Activated CD8-positive, alpha-beta memory T cell treated with anti-CD3 and anti-CD28 coated beads, Interleukin-2, amount 10 ng/mL, durations not matched to agents 7 days and 5 days (primary cell): ENCODE measurements at regions of chr13 and their contacts with region 1.

Region 1: GRCh38 chr13:113187263-113187669 is 21.2 kb downstream of the PCID2 start:
- DNase-seq: peak; percentile 55
- ATAC-seq: peak; percentile 28
- H3K4me3 Mint-ChIP-seq: no peak overlapping the region
- H3K27ac Mint-ChIP-seq: peak overlapping the region; percentile 56
- H3K4me1 Mint-ChIP-seq: peaks cover 56% of the 10 kb centered on the region
- H3K27me3 Mint-ChIP-seq: no peaks in the 10 kb centered on the region

Region 2: DNA sequence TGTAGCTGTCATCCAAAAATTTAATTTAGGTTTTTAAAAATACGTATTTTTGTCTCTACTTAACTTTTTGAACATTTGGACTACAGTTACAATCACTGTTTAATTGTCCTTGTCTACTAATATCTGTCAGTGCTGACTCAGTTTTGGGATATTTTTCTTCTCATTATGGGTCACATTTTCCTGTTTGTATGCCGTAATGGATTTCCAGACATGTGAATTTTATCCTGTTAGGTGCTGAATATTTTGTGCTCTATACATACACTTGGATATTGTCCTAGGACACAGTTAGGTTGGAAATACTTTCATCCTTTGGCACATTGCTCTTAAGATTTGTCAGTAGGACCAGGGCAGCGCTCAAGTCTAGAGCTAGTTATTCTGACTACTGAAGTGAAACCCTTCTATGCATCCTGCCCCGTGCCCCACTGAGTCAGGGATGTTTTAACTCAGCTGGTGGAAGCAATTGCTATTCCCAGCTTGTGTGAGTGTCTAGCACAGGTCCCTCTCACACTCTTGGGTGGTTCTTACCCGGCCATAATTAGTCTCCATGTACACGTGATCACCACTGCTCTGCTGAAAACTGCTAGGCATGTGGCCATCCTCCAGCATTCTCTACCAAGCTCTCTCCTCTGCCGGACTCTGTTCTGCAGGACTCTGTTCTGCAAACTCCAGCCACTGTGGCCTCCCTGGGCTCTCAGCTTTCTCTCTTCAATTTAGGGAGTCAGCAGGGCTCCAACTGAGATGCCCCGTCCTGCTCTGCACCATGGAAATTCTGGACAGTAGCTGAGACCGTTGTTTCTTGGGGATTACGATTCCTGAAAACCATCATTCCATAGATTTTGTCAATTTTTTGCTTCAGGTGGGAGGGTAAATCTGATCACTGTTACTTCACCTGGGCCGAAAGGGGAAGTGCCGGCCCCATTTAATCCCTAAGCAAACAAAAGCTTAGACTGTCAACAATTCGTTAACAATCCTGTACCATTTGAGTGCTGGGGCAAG is 17.7 kb before region 1 on chr13:
- CTCF ChIA-PET with region 1: no interaction called
- DNase-seq: no peak
- ATAC-seq: no peak
- H3K4me3 Mint-ChIP-seq: no peak overlapping the region
- H3K27ac Mint-ChIP-seq: no peak overlapping the region
- H3K4me1 Mint-ChIP-seq: peaks cover 12% of the 10 kb centered on the region
- H3K27me3 Mint-ChIP-seq: no peaks in the 10 kb centered on the region

Region 3: DNA sequence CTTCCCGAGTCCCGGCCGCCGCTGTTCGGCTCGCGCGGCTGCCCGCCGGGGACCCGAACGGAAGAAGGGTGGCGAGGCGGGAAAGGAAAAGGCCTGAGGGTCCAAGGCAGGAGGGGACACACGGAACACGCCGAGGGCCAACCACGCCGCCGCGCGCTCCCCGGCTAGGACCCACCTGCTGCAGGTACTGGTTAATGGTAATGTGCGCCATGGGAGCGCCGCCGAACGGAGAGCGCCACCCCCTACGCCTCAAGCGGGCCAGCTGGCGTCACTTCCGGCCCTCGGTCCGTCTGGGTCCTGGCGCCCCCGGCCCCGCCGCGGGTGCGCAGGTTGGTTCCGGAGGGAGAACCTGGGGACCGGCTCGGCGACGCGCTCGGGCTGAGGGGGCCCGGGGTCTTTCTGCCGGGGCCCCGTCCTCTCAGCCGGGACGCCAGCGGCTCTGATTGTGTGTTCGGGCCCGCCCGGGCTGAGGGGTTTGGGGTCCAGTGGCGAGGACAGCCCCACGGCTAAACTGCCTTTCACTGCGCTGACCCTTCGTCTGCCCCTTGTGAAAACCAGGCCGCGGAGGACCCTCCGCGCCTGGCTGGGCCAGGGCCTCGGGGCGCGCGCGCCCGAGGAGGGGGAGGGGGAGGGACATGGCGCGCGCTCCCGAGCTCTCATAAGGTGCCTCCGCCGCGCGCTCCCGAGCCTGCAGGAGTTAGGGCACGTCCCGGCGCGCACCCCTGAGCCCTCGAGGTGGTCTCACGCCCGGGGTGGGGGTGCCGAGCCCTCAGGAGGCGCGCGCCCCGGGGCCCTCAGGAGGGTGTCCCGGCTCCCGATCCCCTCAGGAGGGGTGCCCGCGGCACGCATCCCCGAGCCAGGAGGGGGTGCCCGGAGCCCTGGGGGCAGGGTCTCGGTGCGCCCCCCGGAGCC is 21.4 kb after region 1 on chr13 and contains the start of gene PCID2:
- CTCF ChIA-PET with region 1: interaction called, 18 read pairs
- DNase-seq: peak; percentile 91
- ATAC-seq: peak; percentile 80
- H3K4me3 Mint-ChIP-seq: peak within 1 kb of the TSS; percentile 81
- H3K27ac Mint-ChIP-seq: peak within 1 kb of the TSS; percentile 88
- H3K4me1 Mint-ChIP-seq: peaks cover 66% of the 10 kb centered on the region
- H3K27me3 Mint-ChIP-seq: no peaks in the 10 kb centered on the region
- total RNA-seq, gene PCID2: 60.3 to 68.0 TPM

Region 4: GRCh38 chr13:113393563-113394338 is 206.5 kb after region 1 on chr13:
- CTCF ChIA-PET with region 1: no interaction called
- DNase-seq: peak; percentile 87
- ATAC-seq: peak; percentile 96
- H3K4me3 Mint-ChIP-seq: peak overlapping the region; percentile 82
- H3K27ac Mint-ChIP-seq: peak overlapping the region; percentile 79
- H3K4me1 Mint-ChIP-seq: peaks cover 8% of the 10 kb centered on the region
- H3K27me3 Mint-ChIP-seq: peaks cover 8% of the 10 kb centered on the region